Heart right ventricle (tissue), 16 donors: ENCODE measurements at regions of chr20 and their contacts with region 1.

Region 1: GRCh38 chr20:19449051-19449450 is 236.6 kb downstream of the SLC24A3 start:
- DNase-seq: no peak
- ATAC-seq: no peak
- H3K4me3 ChIP-seq: no peak overlapping the region
- H3K27ac ChIP-seq: no peak overlapping the region
- H3K4me1 ChIP-seq: peaks cover 0 to 10% (median 0%) of the 10 kb centered on the region in 9 donors
- H3K27me3 ChIP-seq: peaks cover 0 to 2% (median 0%) of the 10 kb centered on the region in 7 donors
- CTCF ChIP-seq: no peak

Region 2: GRCh38 chr20:19382386-19383340 is 66.4 kb before region 1 on chr20:
- intact Hi-C with region 1: loop called in 1 of 10 experiments (anchors 10 kb)
- DNase-seq: no peak
- ATAC-seq: no peak
- H3K4me3 ChIP-seq: no peak overlapping the region
- H3K27ac ChIP-seq: no peak overlapping the region
- H3K4me1 ChIP-seq: no peaks in the 10 kb centered on the region
- H3K27me3 ChIP-seq: no peaks in the 10 kb centered on the region
- CTCF ChIP-seq: no peak

Region 3: DNA sequence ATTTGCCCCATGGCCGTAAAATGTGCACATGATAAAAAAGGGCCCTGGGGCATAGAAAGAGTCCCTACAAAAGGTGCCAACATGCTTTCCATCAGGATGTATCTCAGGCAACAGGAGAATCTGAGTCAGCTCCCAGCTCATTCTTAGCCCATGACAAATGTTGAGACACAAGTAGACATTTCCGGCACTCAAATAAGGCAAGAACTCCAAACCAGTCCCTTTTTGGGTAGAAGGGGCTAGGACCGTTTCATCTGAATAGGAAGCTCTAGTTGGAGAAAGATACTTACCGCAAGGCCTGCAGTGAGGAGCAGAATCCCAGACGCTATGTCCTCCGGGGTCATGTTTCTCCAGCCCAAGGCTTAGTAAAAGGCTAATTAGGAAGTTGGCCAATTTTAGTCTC is 48.0 kb after region 1 on chr20:
- intact Hi-C with region 1: no loop called
- DNase-seq: no peak
- ATAC-seq: no peak
- H3K4me3 ChIP-seq: no peak overlapping the region
- H3K27ac ChIP-seq: no peak overlapping the region
- H3K4me1 ChIP-seq: peaks cover 0 to 19% (median 0%) of the 10 kb centered on the region in 9 donors
- H3K27me3 ChIP-seq: peaks cover 0 to 4% (median 0%) of the 10 kb centered on the region in 7 donors
- CTCF ChIP-seq: no peak